ENCODE measurements at regions of chr22 and their contacts with region 1.

Region 1: DNA sequence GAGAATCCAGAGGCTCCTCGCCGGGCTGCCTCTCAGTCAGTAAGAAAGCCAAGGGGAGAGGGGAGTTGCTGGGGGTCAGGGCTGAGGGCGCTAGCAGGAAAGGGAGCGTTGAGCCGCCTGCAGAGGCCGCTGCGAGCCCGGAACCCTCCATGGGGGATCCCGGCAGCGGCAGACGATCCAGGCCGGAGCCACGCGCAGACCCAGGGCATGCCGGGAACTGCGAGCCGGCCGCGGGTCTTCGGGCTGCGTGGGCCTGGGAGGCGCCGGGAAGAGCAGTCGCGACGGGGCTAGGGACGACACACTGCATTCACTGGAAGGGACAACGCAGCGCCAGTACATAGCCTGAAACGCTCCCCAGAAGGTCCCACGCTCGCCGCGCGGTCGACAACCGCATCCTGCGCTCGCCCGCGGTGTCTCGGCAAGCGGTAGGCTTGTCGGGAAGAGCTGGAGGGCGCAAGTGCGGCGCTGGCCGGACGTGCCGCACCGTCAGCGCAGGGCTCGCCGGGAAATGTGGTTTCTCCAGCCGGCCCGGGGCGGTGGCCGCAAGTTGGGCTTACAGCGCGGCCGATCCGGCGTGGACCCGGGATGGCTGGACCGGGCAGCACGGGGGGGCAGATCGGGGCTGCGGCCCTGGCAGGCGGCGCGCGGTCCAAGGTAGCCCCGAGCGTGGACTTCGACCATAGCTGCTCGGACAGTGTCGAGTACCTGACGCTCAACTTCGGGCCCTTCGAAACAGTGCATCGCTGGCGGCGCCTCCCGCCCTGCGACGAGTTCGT is at the start of gene LZTR1:
- DNase-seq: peak; percentile 80 to 83
- ATAC-seq: peak; percentile 93 to 97 (median 96)
- H3K4me3 ChIP-seq: peak within 1 kb of the TSS; percentile 61 to 98 (median 76)
- H3K27ac ChIP-seq: peak within 1 kb of the TSS; percentile 75 to 98 (median 92)
- H3K4me1 ChIP-seq: peaks cover 20 to 42% (median 34%) of the 10 kb centered on the region in 9 donors
- H3K27me3 ChIP-seq: no peaks in the 10 kb centered on the region
- CTCF ChIP-seq: peak; percentile 8 to 79 (median 64)
- total RNA-seq, gene LZTR1: 14.7 to 32.5 (median 23.7) TPM

Region 2: GRCh38 chr22:20725987-20726558 is 255.9 kb before region 1 on chr22:
- intact Hi-C with region 1: no loop called
- DNase-seq: no peak
- ATAC-seq: no peak
- H3K4me3 ChIP-seq: no peak overlapping the region
- H3K27ac ChIP-seq: no peak overlapping the region
- H3K4me1 ChIP-seq: peaks cover 0 to 8% (median 0%) of the 10 kb centered on the region in 9 donors
- H3K27me3 ChIP-seq: no peaks in the 10 kb centered on the region
- CTCF ChIP-seq: no peak

Region 3: DNA sequence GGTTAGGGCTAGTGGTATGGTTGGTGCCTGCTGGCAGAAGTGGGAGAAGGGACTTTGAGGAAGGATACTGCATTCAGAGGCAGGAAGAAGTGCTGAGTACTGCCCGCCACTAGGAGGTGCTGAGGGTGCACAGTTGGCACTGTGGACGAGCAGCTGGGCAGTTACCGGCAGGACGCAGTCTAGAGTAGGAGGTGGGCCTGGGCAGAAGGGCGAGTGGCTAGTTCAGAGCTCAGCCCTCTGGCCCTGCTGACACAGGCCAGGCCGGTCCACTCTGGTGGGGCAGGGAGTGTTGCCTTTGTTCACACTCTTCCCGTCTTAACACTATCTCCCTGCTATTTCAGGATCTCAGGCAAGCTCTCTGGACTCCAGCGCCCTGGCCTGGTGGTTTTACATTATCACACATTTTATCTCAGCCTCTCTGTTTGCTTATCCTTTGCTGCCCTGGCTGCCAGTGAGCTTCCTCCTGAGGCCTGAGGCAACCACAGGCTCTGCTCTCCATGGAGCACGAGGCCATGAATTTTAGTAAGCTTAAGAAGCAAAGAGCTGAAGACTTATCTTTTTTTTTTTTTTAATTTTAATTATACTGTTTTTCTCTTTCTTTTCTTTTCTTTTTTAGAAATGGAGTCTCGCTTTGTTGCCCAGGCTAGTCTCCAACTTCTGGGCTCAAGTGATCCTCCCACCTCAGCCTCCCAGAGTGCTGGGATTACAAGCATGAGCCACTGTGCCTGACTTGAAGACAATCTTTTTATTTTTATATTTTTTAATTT is 96.2 kb before region 1 on chr22:
- intact Hi-C with region 1: loop called in 2 of 10 experiments (anchors 5 to 10 kb)
- DNase-seq: peak; percentile 77 to 81
- ATAC-seq: peak; percentile 91 to 96 (median 95)
- H3K4me3 ChIP-seq: no peak overlapping the region
- H3K27ac ChIP-seq: peak overlapping the region in 9 of 10 donors; percentile 7 to 85 (median 67)
- H3K4me1 ChIP-seq: peaks cover 0 to 19% (median 12%) of the 10 kb centered on the region in 9 donors
- H3K27me3 ChIP-seq: no peaks in the 10 kb centered on the region
- CTCF ChIP-seq: peak; percentile 67 to 85 (median 81)

Region 4: GRCh38 chr22:21045585-21046294 is 63.8 kb after region 1 on chr22 and contains the start of gene LRRC74B:
- intact Hi-C with region 1: loop called in 1 of 10 experiments (anchors 10 kb)
- DNase-seq: peak; percentile 89 to 91
- ATAC-seq: peak; percentile 92 to 98 (median 98)
- H3K4me3 ChIP-seq: peak within 1 kb of the TSS; percentile 27 to 63 (median 54)
- H3K27ac ChIP-seq: peak within 1 kb of the TSS in 1 of 10 donors; percentile 35
- H3K4me1 ChIP-seq: peaks cover 5 to 16% (median 14%) of the 10 kb centered on the region in 9 donors
- H3K27me3 ChIP-seq: peaks cover 0 to 7% (median 0%) of the 10 kb centered on the region in 7 donors
- CTCF ChIP-seq: no peak
- total RNA-seq, gene LRRC74B: not detected